ENCODE measurements at regions of chr17 and their contacts with region 1.

Region 1: GRCh38 chr17:44123356-44124117 is at the start of gene HDAC5:
- DNase-seq: peak; percentile 92 to 96
- ATAC-seq: peak; percentile 84 to 92
- H3K4me3 ChIP-seq: peak within 1 kb of the TSS; percentile 81
- H3K27ac ChIP-seq: peak within 1 kb of the TSS; percentile 87 to 93
- H3K4me1 ChIP-seq: peaks cover 28% of the 10 kb centered on the region
- CTCF ChIP-seq: peak; percentile 68
- EP300 ChIP-seq: no peak
- POLR2A ChIP-seq: peak; percentile 60
- RAD21 ChIP-seq: peak; percentile 53 to 63
- polyA plus RNA-seq, gene HDAC5: 3.1 and 5.7 TPM in 2 replicates

Region 2: GRCh38 chr17:44014437-44015172 is 108.9 kb before region 1 on chr17 and contains the start of gene TMEM101:
- CTCF ChIA-PET with region 1: no interaction called
- POLR2A ChIA-PET with region 1: no interaction called
- DNase-seq: peak; percentile 97 to 100
- ATAC-seq: peak; percentile 91 to 95
- H3K4me3 ChIP-seq: peak within 1 kb of the TSS; percentile 80
- H3K27ac ChIP-seq: peak within 1 kb of the TSS; percentile 89 to 92
- H3K4me1 ChIP-seq: no peaks in the 10 kb centered on the region
- CTCF ChIP-seq: no peak
- EP300 ChIP-seq: no peak
- POLR2A ChIP-seq: peak; percentile 85
- RAD21 ChIP-seq: no peak
- polyA plus RNA-seq, gene TMEM101: 38.2 and 40.3 TPM in 2 replicates

Region 3: DNA sequence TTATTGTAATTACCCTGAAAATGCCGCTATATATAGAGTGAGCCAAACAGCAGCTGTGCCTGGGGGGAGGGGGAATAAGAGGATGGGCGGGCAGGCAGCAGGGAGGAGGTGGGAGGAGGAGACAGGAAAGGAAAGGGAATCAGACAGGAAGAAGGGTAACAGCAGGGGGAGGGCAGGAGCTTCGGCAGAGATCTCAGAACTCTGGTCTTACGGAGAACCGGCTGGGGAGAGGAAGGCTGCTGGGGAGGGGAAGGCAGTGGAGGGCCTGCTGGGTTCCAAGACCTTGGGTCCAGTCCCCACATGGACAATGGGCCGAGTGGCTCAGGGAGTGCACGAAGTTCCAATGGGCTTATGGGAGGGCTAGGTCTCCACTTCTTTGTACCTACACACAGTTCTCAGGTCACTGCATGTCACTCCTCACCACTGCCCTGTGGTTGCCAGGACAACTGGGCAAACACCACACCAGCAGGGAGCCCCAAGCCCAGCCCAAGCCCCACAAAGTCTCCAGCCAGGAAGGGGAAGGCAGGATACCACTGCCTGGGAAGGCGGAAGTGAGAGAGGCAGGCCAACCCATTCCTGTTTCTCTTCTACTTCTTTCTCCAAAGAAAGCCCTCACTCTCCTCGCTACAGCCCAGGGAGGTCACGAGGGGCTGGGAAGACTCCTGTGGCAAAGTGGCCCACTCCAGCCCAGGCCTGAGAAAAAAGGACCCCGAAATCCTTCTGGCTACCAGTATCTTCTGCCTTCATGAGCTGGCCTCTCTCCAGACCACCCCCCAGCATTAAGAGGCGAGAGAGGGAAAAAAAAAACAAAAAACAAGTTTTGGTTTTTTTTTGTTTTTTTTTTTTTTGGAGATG is 27.7 kb before region 1 on chr17:
- CTCF ChIA-PET with region 1: interaction called, 1,202 read pairs
- POLR2A ChIA-PET with region 1: interaction called, 13 read pairs
- DNase-seq: peak; percentile 88 to 94
- ATAC-seq: peak; percentile 85 to 87
- H3K4me3 ChIP-seq: peak overlapping the region; percentile 30
- H3K27ac ChIP-seq: peak overlapping the region; percentile 92 to 94
- H3K4me1 ChIP-seq: peaks cover 32% of the 10 kb centered on the region
- CTCF ChIP-seq: no peak; the same call in 2 of the 3 replicates
- EP300 ChIP-seq: no peak
- POLR2A ChIP-seq: peak; percentile 61
- RAD21 ChIP-seq: peak in 1 of 2 experiments; percentile 40; a peak in 3 of 5 replicates

Region 4: DNA sequence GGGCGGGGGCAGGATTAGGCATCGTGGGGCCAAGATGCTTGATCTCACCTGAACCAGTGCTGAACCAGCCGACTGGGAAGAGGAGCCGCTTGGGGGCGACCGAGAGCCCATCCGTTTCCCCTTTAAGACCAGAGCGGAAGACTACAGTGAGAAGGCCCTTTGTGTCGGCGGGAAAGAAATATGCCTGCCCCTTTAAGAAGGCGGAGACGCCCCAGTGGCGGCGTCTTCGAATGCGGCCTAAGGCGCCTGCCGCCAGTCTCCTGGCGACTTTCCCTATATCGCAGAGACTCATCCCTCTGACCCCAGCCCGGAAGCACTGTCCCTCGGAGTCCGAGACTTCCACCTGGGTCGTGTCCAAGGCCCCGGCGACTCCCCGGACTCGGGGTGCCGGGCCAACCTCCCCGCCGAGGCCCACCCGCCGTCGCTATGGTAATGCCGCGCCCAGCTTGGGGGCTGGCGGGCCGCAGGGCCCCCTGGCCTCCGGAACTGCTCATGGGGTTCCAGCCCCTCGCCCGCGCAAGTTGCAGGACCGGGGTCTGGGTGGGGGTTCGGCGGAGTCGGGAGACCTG is 18.3 kb after region 1 on chr17 and contains the start of gene HROB:
- CTCF ChIA-PET with region 1: interaction called, 163 read pairs
- POLR2A ChIA-PET with region 1: interaction called, 23 read pairs
- DNase-seq: peak; percentile 94 to 99
- ATAC-seq: peak; percentile 74 to 83
- H3K4me3 ChIP-seq: peak within 1 kb of the TSS; percentile 88
- H3K27ac ChIP-seq: peak within 1 kb of the TSS; percentile 83 to 93
- H3K4me1 ChIP-seq: peaks cover 32% of the 10 kb centered on the region
- CTCF ChIP-seq: peak; percentile 92
- EP300 ChIP-seq: no peak
- POLR2A ChIP-seq: no peak
- RAD21 ChIP-seq: peak; percentile 62 to 70
- polyA plus RNA-seq, gene HROB: 5.4 and 5.6 TPM in 2 replicates

Region 5: DNA sequence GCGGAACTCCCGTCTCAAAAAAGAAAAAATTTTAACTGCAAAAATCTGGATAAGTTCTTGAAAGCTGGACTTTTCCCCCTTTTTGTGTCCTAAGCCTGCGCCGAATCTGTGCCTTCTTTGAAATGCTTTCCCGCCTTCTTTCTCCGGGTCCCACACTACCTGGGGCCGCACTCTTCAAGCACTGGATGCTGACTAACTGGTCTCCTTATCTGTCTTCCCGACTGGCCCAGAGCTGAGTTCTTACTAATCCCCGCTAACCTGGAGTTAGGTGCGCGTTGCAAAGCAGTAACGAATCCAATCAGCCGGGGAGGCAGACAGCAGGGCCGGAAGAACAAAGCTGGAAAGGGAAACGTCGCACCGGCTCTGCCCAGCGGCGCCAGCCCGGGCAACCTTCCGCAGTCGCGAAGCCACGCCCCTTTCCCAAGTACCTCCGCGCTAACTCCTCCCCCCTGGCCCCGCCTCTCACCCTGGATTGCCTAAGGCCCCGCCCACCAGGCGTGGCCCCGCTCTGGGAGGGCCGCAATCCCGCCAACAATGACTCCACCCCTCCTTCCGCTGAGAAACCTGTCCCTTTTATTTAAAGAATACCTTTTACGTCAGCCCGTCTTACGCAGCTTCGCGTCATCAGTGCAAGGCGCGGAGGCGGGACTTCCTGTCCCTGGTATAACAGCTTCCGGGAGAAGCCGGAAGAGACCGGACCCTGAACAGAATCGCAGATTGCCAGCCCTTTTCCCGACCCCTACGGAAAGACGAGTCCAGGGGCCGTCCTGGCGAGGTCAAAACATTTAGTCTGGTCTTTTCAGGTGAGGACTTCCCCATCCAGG is 63.0 kb after region 1 on chr17 and contains the start of gene TMUB2:
- CTCF ChIA-PET with region 1: interaction called, 4 read pairs
- POLR2A ChIA-PET with region 1: interaction called, 16 read pairs
- DNase-seq: peak; percentile 100
- ATAC-seq: peak; percentile 85 to 88
- H3K4me3 ChIP-seq: peak within 1 kb of the TSS; percentile 87
- H3K27ac ChIP-seq: peak within 1 kb of the TSS; percentile 92 to 97
- H3K4me1 ChIP-seq: peaks cover 24% of the 10 kb centered on the region
- CTCF ChIP-seq: no peak
- EP300 ChIP-seq: no peak
- POLR2A ChIP-seq: peak; percentile 98
- RAD21 ChIP-seq: no peak
- polyA plus RNA-seq, gene TMUB2: 36.2 and 43.3 TPM in 2 replicates

Region 6: GRCh38 chr17:44258811-44259351 is 135.3 kb after region 1 on chr17:
- CTCF ChIA-PET with region 1: no interaction called
- POLR2A ChIA-PET with region 1: no interaction called
- DNase-seq: no peak
- ATAC-seq: 0 out of 6 replicates have a peak, but pooled peaks of 1 of the 2 experiments have one; percentile 5
- H3K4me3 ChIP-seq: no peak overlapping the region
- H3K27ac ChIP-seq: no peak overlapping the region
- H3K4me1 ChIP-seq: no peaks in the 10 kb centered on the region
- CTCF ChIP-seq: no peak
- EP300 ChIP-seq: no peak
- POLR2A ChIP-seq: no peak
- RAD21 ChIP-seq: no peak

Region 7: DNA sequence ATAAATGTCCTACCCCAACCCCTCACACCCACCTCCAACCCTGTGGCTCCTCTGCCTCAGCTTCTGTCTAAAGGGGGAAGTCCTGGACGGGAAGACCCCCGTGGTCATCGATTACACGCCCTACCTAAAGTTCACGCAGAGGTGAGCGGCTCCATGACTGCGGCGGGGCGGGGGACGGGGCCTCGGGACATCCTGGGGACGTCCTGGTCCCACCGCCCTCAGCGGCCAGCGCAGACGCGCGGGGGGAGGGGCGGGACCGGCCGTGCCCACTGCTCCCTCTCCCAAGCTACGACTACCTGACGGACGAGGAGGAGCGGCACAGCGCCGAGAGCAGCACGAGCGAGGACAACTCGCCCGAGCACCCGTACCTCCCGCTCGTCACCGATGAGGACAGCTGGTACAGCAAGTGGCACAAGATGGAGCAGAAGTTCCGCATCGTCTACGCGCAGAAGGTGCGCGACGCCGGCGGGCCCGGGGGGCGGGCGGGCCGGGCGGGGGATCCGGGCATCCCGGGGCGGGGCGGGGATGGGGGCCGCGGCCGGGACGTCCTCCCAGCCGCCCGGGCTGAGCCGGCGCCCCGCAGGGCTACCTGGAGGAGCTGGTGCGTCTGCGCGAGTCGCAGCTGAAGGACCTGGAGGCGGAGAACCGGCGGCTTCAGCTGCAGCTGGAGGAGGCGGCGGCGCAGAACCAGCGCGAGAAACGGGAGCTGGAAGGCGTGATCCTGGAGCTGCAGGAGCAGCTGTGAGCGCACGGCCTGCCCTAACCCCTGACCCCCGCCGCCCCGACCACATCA is 191.5 kb after region 1 on chr17:
- CTCF ChIA-PET with region 1: no interaction called
- POLR2A ChIA-PET with region 1: no interaction called
- DNase-seq: peak; percentile 73 to 93
- ATAC-seq: peak; percentile 64 to 73
- H3K4me3 ChIP-seq: peak overlapping the region; percentile 63
- H3K27ac ChIP-seq: peak overlapping the region; percentile 51 to 78; a peak in 5 of 6 replicates
- H3K4me1 ChIP-seq: 0 out of 3 replicates have a peak, but pooled peaks cover 4% of the 10 kb centered on the region
- CTCF ChIP-seq: no peak
- EP300 ChIP-seq: no peak
- POLR2A ChIP-seq: no peak
- RAD21 ChIP-seq: no peak

Region 8: GRCh38 chr17:44444735-44445105 is 321.2 kb after region 1 on chr17:
- CTCF ChIA-PET with region 1: no interaction called
- POLR2A ChIA-PET with region 1: no interaction called
- DNase-seq: peak in 1 of 2 experiments; percentile 65
- ATAC-seq: peak; percentile 56 to 74; a peak in 5 of 6 replicates
- H3K4me3 ChIP-seq: no peak overlapping the region
- H3K27ac ChIP-seq: peak overlapping the region; percentile 65 to 82
- H3K4me1 ChIP-seq: peaks cover 20% of the 10 kb centered on the region
- CTCF ChIP-seq: no peak
- EP300 ChIP-seq: no peak
- POLR2A ChIP-seq: no peak
- RAD21 ChIP-seq: no peak

Measured in A549 (cell line).